ENCODE measurements at regions of chr5 and their contacts with region 1.

Region 1: GRCh38 chr5:133423618-133424282 is 188.6 kb downstream of the FSTL4 start:
- DNase-seq: peak; percentile 65 to 83
- ATAC-seq: peak; percentile 77 to 90 (median 85)
- H3K4me3 ChIP-seq: no peak overlapping the region
- H3K27ac ChIP-seq: no peak overlapping the region
- H3K4me1 ChIP-seq: no peaks in the 10 kb centered on the region
- H3K27me3 ChIP-seq: no peaks in the 10 kb centered on the region
- CTCF ChIP-seq: peak; percentile 89

Region 2: DNA sequence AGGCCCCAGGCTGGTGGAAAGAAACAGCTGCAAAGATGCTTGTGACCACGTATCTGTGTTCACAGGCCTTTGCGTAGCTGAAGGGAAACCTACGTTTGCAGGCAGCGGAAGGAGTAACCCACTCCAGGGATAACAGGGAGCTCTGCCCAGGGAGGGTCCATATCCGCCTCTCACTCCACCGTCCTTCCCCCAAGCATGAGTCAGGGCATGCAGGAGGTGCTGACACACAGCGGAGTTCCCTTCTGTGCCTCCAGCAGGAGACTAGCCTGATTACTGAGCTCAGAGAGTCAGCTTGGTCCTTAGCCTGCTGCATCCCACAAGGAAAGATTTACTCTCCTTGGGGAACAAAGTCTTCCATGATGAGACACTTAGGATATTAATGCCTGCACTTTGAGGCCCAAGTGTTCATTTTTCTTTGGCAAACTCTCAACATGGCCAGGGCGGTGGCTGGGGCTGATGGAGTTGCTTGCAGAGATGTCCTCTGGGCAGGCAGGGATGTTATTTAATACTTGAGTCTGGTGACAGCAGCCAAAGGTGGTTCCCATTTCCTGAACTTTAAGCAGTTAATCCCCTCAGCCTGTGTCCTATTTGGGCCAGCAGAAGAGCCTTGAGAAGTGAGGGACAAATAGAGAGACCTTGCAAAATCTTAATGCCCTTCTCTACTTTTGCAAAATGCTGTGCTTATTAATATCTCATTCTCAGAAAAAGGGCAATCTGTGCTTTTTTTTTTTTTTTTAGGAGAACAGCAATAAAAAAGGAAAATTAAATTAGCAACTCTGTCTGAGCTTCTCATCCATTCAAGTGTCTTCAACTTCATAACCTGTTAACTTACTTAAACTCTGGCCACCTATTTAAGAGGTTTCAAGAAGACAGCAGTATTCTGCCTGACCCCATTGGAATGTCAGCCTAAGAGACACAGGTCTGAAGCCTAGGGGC is 149.8 kb before region 1 on chr5:
- intact Hi-C with region 1: no loop called
- DNase-seq: peak; percentile 34 to 69
- ATAC-seq: peak; percentile 73 to 88 (median 86)
- H3K4me3 ChIP-seq: no peak overlapping the region
- H3K27ac ChIP-seq: peak overlapping the region; percentile 78
- H3K4me1 ChIP-seq: peaks cover 40% of the 10 kb centered on the region
- H3K27me3 ChIP-seq: no peaks in the 10 kb centered on the region
- CTCF ChIP-seq: no peak

Region 3: GRCh38 chr5:133610489-133611356 is 187.0 kb after region 1 on chr5:
- intact Hi-C with region 1: loop called (anchors 2 to 10 kb)
- DNase-seq: peak; percentile 61 to 75
- ATAC-seq: peak; percentile 90 to 96 (median 94)
- H3K4me3 ChIP-seq: peak overlapping the region; percentile 52
- H3K27ac ChIP-seq: no peak overlapping the region
- H3K4me1 ChIP-seq: peaks cover 16% of the 10 kb centered on the region
- H3K27me3 ChIP-seq: peaks cover 0 to 90% (median 14%) of the 10 kb centered on the region in 3 donors
- CTCF ChIP-seq: peak; percentile 56

Region 4: DNA sequence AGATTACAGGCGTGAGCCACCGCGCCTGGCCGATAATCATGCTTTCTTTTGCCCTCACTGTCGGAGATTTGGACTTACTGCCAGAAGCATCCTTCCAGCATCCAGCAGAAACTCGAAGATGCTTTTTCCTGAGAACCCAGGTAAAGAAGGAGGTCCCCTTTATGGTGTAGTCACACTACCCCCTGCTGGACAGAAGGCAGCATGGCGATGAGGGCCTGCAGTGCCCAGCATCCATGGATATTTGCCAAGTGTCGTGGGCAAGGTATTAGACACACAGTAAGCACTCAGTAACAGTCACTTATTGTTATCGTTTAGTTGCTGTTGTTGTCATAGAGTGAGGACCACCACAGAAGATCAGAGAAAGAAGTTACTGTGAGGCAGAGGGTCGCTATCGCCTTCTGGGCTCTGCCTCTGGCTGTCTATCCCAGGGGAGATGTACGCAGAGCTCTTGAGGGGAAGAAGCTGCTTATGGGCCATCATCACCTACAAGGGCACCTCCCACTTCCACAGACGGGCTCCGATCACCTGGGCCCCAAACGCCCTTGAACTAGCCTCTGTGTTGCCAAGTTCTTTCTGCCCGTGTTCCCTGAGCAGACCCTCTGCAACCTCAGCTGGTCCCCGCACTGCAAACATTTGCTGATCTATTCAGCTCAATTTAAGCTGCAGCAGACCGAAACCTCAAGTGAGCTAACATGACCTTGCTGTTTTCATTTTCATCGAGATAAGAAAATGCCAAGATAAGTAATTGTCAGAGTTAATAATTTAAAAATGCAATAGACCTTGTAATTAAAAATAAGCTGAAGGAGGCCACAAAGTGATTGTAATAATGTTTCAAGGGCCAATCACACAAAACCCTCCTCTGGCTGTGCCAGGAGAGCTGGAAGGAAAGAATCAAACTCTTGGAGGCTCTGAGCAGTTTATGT is 520.8 kb after region 1 on chr5:
- intact Hi-C with region 1: loop called in 1 of 2 experiments (anchors 10 kb)
- DNase-seq: no peak
- ATAC-seq: peak; percentile 47 to 72 (median 58)
- H3K4me3 ChIP-seq: no peak overlapping the region
- H3K27ac ChIP-seq: no peak overlapping the region
- H3K4me1 ChIP-seq: no peaks in the 10 kb centered on the region
- H3K27me3 ChIP-seq: no peaks in the 10 kb centered on the region
- CTCF ChIP-seq: peak; percentile 49